Activated CD4-positive, alpha-beta memory T cell treated with anti-CD3 and anti-CD28 coated beads, Interleukin-2, amount 10 ng/mL, durations not matched to agents 7 days and 5 days (primary cell): ENCODE measurements at regions of chr16 and their contacts with region 1.

Region 1: GRCh38 chr16:66894948-66895688 is 14.8 kb downstream of the PDP2 start:
- DNase-seq: peak; percentile 76
- H3K4me3 Mint-ChIP-seq: no peak overlapping the region
- H3K27ac Mint-ChIP-seq: no peak overlapping the region
- H3K4me1 Mint-ChIP-seq: peaks cover 24% of the 10 kb centered on the region
- H3K27me3 Mint-ChIP-seq: no peaks in the 10 kb centered on the region

Region 2: GRCh38 chr16:66682271-66682670 is 212.8 kb before region 1 on chr16:
- CTCF ChIA-PET with region 1: no interaction called
- POLR2A ChIA-PET with region 1: no interaction called
- DNase-seq: no peak
- H3K4me3 Mint-ChIP-seq: no peak overlapping the region
- H3K27ac Mint-ChIP-seq: no peak overlapping the region
- H3K4me1 Mint-ChIP-seq: no peaks in the 10 kb centered on the region
- H3K27me3 Mint-ChIP-seq: no peaks in the 10 kb centered on the region

Region 3: GRCh38 chr16:66880288-66881013 is 14.7 kb before region 1 on chr16 and contains the start of gene PDP2:
- CTCF ChIA-PET with region 1: interaction called, 12 read pairs
- POLR2A ChIA-PET with region 1: interaction called, 6 read pairs
- DNase-seq: peak; percentile 93
- H3K4me3 Mint-ChIP-seq: peak within 1 kb of the TSS; percentile 98
- H3K27ac Mint-ChIP-seq: peak within 1 kb of the TSS; percentile 89
- H3K4me1 Mint-ChIP-seq: peaks cover 54% of the 10 kb centered on the region
- H3K27me3 Mint-ChIP-seq: no peaks in the 10 kb centered on the region
- total RNA-seq, gene PDP2: 30.7 to 33.9 TPM

Region 4: GRCh38 chr16:66905633-66906539 is 10.8 kb after region 1 on chr16:
- CTCF ChIA-PET with region 1: interaction called, 15 read pairs
- POLR2A ChIA-PET with region 1: interaction called, 7 read pairs
- DNase-seq: peak; percentile 56
- H3K4me3 Mint-ChIP-seq: no peak overlapping the region
- H3K27ac Mint-ChIP-seq: no peak overlapping the region
- H3K4me1 Mint-ChIP-seq: peaks cover 8% of the 10 kb centered on the region
- H3K27me3 Mint-ChIP-seq: no peaks in the 10 kb centered on the region

Region 5: GRCh38 chr16:66988197-66988788 is 93.2 kb after region 1 on chr16 and contains the start of gene CES4A:
- CTCF ChIA-PET with region 1: no interaction called
- POLR2A ChIA-PET with region 1: no interaction called
- DNase-seq: no peak
- H3K4me3 Mint-ChIP-seq: no peak within 1 kb of the TSS
- H3K27ac Mint-ChIP-seq: peak within 1 kb of the TSS; percentile 98
- H3K4me1 Mint-ChIP-seq: peaks cover 47% of the 10 kb centered on the region
- H3K27me3 Mint-ChIP-seq: no peaks in the 10 kb centered on the region
- total RNA-seq, gene CES4A: 37.8 to 39.3 TPM

Region 6: GRCh38 chr16:67021321-67021720 is 126.2 kb after region 1 on chr16:
- CTCF ChIA-PET with region 1: no interaction called
- POLR2A ChIA-PET with region 1: no interaction called
- DNase-seq: peak; percentile 9
- H3K4me3 Mint-ChIP-seq: no peak overlapping the region
- H3K27ac Mint-ChIP-seq: no peak overlapping the region
- H3K4me1 Mint-ChIP-seq: peaks cover 35% of the 10 kb centered on the region
- H3K27me3 Mint-ChIP-seq: no peaks in the 10 kb centered on the region